Transverse colon (tissue), 4 donors: ENCODE measurements at regions of chr13 and their contacts with region 1.

Region 1: GRCh38 chr13:25574437-25575411 is 202.9 kb downstream of the ATP8A2 start:
- DNase-seq: peak; percentile 79
- H3K4me3 ChIP-seq: no peak overlapping the region
- H3K27ac ChIP-seq: no peak overlapping the region
- H3K4me1 ChIP-seq: no peaks in the 10 kb centered on the region
- H3K27me3 ChIP-seq: no peaks in the 10 kb centered on the region
- CTCF ChIP-seq: peak; percentile 68 to 75 (median 74)
- EP300 ChIP-seq: no peak
- POLR2A ChIP-seq: no peak

Region 2: DNA sequence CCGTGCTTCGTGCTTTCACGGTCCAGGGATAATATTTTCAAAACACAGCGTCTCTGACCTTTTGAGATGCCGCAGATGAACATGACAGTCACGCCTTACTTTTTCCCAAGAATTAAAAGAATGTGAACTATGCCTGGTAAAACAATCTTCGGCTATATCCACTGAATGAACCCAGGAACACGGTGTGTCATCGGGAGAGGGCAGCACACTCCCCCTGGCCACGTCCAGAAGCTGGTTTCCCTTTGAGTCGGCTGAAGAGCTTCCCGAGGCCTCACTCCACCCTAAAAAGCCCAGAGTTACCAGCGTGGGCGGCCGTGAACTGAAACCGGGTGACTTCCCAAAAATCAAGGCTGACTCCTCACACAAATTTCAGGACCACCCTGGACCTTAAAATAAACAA is 500.0 kb after region 1 on chr13:
- in situ Hi-C with region 1: loop called in 1 of 4 experiments (anchors 10 kb)
- intact Hi-C with region 1: loop called (anchors 5 kb)
- DNase-seq: no peak
- H3K4me3 ChIP-seq: no peak overlapping the region
- H3K27ac ChIP-seq: no peak overlapping the region
- H3K4me1 ChIP-seq: no peaks in the 10 kb centered on the region
- H3K27me3 ChIP-seq: peaks cover 29% of the 10 kb centered on the region
- CTCF ChIP-seq: no peak
- EP300 ChIP-seq: no peak
- POLR2A ChIP-seq: no peak

Region 3: GRCh38 chr13:26254583-26255111 is 679.9 kb after region 1 on chr13:
- in situ Hi-C with region 1: no loop called
- intact Hi-C with region 1: no loop called
- DNase-seq: peak; percentile 69
- H3K4me3 ChIP-seq: peak overlapping the region; percentile 58 to 82 (median 78)
- H3K27ac ChIP-seq: peak overlapping the region; percentile 90 to 93 (median 92)
- H3K4me1 ChIP-seq: peaks cover 0 to 36% (median 16%) of the 10 kb centered on the region in 4 donors
- H3K27me3 ChIP-seq: no peaks in the 10 kb centered on the region
- CTCF ChIP-seq: no peak
- EP300 ChIP-seq: no peak
- POLR2A ChIP-seq: no peak